ENCODE measurements at regions of chr2 and their contacts with region 1.

Region 1: DNA sequence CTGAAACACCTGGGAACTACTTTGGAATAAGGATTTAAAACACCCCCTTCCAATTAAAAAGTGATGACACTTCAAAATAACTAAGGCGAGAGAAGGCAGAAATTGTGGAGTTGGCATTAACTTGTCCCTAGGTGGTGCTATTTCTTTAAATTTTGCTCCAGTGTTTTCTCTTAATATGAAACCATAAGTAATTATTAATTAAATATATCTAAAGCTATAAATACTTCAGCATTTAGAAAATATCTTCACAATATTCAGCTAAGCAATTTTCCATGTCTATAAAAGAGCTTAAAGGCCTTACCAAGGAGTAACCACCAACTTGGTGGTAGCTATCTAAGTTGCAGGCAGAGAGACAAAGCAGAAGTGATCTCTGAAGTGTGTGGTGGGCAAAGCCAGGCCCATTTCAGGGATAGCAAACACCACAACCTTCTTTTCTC is 186.8 kb upstream of the PGAP1 start:
- DNase-seq: peak in 2 of 9 experiments; percentile 54 to 69
- ATAC-seq: peak; percentile 52
- H3K4me3 ChIP-seq: no peak overlapping the region
- H3K4me3 Mint-ChIP-seq: no peak overlapping the region
- H3K27ac ChIP-seq: no peak overlapping the region
- H3K27ac Mint-ChIP-seq: peak overlapping the region; percentile 84
- H3K4me1 ChIP-seq: peaks cover 14% of the 10 kb centered on the region
- H3K4me1 Mint-ChIP-seq: peaks cover 35% of the 10 kb centered on the region
- H3K27me3 ChIP-seq: no peaks in the 10 kb centered on the region
- H3K27me3 Mint-ChIP-seq: no peaks in the 10 kb centered on the region
- CTCF ChIP-seq: peak; percentile 75

Region 2: DNA sequence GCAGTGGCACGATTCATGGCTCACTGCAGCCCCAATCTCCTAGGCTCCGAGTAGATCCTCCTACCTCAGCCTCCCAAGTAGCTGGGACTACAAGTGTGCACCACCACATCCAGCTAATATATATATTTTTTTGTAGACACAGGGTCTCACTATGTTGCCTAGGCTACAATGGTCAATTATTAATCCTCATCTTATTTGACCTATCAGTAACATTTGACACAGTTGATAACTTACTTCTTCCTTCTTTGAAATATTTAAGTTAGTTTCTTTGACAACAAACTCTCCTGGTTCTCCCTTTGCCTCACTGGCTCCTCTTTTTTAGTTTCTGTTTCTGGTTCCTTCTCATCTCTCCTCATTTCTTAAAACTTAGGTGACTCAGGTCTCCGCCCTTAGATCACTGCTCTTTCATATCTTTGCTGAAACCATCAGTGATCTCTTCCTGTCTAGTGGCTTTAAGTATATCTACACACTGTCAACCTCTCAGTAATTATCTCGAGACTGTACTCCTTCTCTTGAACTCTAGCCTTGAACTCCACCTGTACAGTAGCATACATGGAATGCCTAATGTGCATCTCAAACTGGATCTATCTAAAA is 198.3 kb before region 1 on chr2:
- CTCF ChIA-PET with region 1: no interaction called
- POLR2A ChIA-PET with region 1: no interaction called
- intact Hi-C with region 1: no loop called
- DNase-seq: peak in 2 of 9 experiments; percentile 35 to 61
- ATAC-seq: peak; percentile 97
- H3K4me3 ChIP-seq: peak overlapping the region in 1 of 2 experiments; percentile 16
- H3K4me3 Mint-ChIP-seq: peak overlapping the region; percentile 59
- H3K27ac ChIP-seq: peak overlapping the region; percentile 26 to 47
- H3K27ac Mint-ChIP-seq: peak overlapping the region; percentile 91
- H3K4me1 ChIP-seq: peaks cover 15% of the 10 kb centered on the region
- H3K4me1 Mint-ChIP-seq: peaks cover 29% of the 10 kb centered on the region
- H3K27me3 ChIP-seq: no peaks in the 10 kb centered on the region
- H3K27me3 Mint-ChIP-seq: no peaks in the 10 kb centered on the region
- CTCF ChIP-seq: no peak

Region 3: GRCh38 chr2:197137231-197137630 is 23.9 kb after region 1 on chr2:
- CTCF ChIA-PET with region 1: interaction called, 33 read pairs
- POLR2A ChIA-PET with region 1: interaction called, 4 read pairs
- intact Hi-C with region 1: no loop called
- DNase-seq: no peak
- ATAC-seq: no peak
- H3K4me3 ChIP-seq: no peak overlapping the region
- H3K4me3 Mint-ChIP-seq: peak overlapping the region; percentile 13
- H3K27ac ChIP-seq: peak overlapping the region; percentile 13 to 14
- H3K27ac Mint-ChIP-seq: peak overlapping the region; percentile 80
- H3K4me1 ChIP-seq: peaks cover 89% of the 10 kb centered on the region
- H3K4me1 Mint-ChIP-seq: peaks cover 93% of the 10 kb centered on the region
- H3K27me3 ChIP-seq: no peaks in the 10 kb centered on the region
- H3K27me3 Mint-ChIP-seq: no peaks in the 10 kb centered on the region
- CTCF ChIP-seq: no peak

Region 4: DNA sequence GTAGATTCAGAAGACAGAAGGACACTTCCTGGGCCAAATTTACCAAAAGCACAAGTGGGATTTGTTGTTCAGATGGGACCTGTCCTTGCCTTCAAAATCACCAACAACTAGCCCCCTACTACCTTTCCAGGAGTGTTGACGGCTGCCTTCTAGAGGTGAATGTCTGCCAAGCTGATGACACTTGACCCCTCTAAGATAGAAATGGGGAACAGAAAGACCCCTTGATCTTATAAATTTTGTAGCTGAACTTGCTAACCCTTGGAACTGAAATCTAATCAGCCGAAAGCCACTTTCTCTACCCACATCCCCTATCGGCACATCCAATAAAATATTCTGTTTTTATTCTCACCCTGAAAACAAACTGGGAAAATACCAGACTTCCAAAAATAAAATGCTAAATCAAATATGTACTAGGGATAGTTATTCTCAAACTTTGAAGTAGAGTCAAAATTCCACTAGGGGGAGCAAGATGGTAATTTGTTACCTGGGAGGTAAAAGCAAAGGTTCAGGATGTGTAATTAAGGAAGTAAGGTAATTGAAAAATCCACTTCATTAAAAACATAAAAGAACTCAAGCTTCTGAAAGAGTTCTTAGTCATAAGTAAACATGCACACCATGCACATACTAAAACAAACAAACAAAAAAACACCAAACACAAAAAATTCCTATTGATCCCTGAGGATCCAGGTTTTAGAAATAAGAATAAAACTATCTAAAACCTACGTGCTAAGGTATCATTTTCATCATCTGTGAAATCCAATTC is 78.1 kb after region 1 on chr2:
- CTCF ChIA-PET with region 1: interaction called, 35 read pairs
- POLR2A ChIA-PET with region 1: no interaction called
- intact Hi-C with region 1: loop called (anchors 1 kb)
- DNase-seq: peak in 2 of 9 experiments; percentile 77 to 86
- ATAC-seq: peak; percentile 52
- H3K4me3 ChIP-seq: no peak overlapping the region
- H3K4me3 Mint-ChIP-seq: peak overlapping the region; percentile 10
- H3K27ac ChIP-seq: peak overlapping the region; percentile 16 to 72
- H3K27ac Mint-ChIP-seq: peak overlapping the region; percentile 82
- H3K4me1 ChIP-seq: peaks cover 84% of the 10 kb centered on the region
- H3K4me1 Mint-ChIP-seq: peaks cover 88% of the 10 kb centered on the region
- H3K27me3 ChIP-seq: no peaks in the 10 kb centered on the region
- H3K27me3 Mint-ChIP-seq: no peaks in the 10 kb centered on the region
- CTCF ChIP-seq: peak; percentile 83

Region 5: DNA sequence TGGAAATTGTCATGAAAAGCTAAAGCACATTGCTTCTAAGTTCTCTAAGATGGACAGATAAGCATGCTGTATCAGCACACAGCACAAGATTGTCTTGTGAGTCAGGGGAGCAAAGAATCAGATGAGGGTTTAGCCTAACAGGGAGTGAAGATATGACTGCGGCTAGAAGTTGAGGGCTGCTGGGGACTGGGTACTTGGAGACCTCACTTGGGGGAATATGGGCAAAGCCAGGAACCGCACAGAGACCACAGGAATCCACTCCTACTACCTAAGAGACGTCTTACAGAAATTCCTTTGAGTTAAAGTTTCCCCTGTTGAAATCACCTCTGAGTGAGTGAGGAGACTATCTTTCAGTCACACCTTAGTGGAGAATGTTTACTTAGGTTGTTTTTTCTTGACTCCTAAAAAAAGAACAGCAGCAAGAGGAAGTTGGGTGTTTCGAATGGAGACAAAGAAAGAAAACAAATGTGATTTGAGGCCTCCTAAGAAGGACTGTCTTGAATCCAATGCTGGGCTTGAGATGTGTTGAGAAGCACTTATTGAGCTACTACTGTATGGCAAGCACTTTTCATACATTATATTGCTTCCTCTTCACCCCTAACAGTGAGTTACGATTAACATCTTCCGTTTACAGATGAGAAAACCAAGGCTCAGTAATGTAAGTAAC is 96.6 kb after region 1 on chr2:
- CTCF ChIA-PET with region 1: interaction called, 12 read pairs
- POLR2A ChIA-PET with region 1: no interaction called
- intact Hi-C with region 1: no loop called
- DNase-seq: peak in 7 of 9 experiments; percentile 22 to 73 (median 48)
- ATAC-seq: peak; percentile 10
- H3K4me3 ChIP-seq: peak overlapping the region in 1 of 2 experiments; percentile 11
- H3K4me3 Mint-ChIP-seq: peak overlapping the region; percentile 54
- H3K27ac ChIP-seq: peak overlapping the region; percentile 24 to 73
- H3K27ac Mint-ChIP-seq: peak overlapping the region; percentile 100
- H3K4me1 ChIP-seq: peaks cover 99% of the 10 kb centered on the region
- H3K4me1 Mint-ChIP-seq: peaks cover 97% of the 10 kb centered on the region
- H3K27me3 ChIP-seq: no peaks in the 10 kb centered on the region
- H3K27me3 Mint-ChIP-seq: no peaks in the 10 kb centered on the region
- CTCF ChIP-seq: no peak

Region 6: GRCh38 chr2:197378494-197379307 is 265.4 kb after region 1 on chr2:
- CTCF ChIA-PET with region 1: interaction called, 40 read pairs
- POLR2A ChIA-PET with region 1: interaction called, 4 read pairs
- intact Hi-C with region 1: loop called (anchors 1 kb)
- DNase-seq: peak; percentile 24 to 78 (median 62)
- ATAC-seq: peak; percentile 57
- H3K4me3 ChIP-seq: no peak overlapping the region
- H3K4me3 Mint-ChIP-seq: no peak overlapping the region
- H3K27ac ChIP-seq: no peak overlapping the region
- H3K27ac Mint-ChIP-seq: no peak overlapping the region
- H3K4me1 ChIP-seq: peaks cover 7% of the 10 kb centered on the region
- H3K4me1 Mint-ChIP-seq: peaks cover 12% of the 10 kb centered on the region
- H3K27me3 ChIP-seq: no peaks in the 10 kb centered on the region
- H3K27me3 Mint-ChIP-seq: no peaks in the 10 kb centered on the region
- CTCF ChIP-seq: peak; percentile 93

Region 7: GRCh38 chr2:197777823-197778407 is 664.6 kb after region 1 on chr2:
- CTCF ChIA-PET with region 1: no interaction called
- POLR2A ChIA-PET with region 1: no interaction called
- intact Hi-C with region 1: loop called in 1 of 2 experiments (anchors 5 kb)
- DNase-seq: peak in 3 of 9 experiments; percentile 38 to 58 (median 48)
- ATAC-seq: no peak
- H3K4me3 ChIP-seq: no peak overlapping the region
- H3K4me3 Mint-ChIP-seq: no peak overlapping the region
- H3K27ac ChIP-seq: no peak overlapping the region
- H3K27ac Mint-ChIP-seq: no peak overlapping the region
- H3K4me1 ChIP-seq: no peaks in the 10 kb centered on the region
- H3K4me1 Mint-ChIP-seq: no peaks in the 10 kb centered on the region
- H3K27me3 ChIP-seq: no peaks in the 10 kb centered on the region
- H3K27me3 Mint-ChIP-seq: no peaks in the 10 kb centered on the region
- CTCF ChIP-seq: peak; percentile 97